ENCODE measurements at regions of chr13 and their contacts with region 1.

Region 1: DNA sequence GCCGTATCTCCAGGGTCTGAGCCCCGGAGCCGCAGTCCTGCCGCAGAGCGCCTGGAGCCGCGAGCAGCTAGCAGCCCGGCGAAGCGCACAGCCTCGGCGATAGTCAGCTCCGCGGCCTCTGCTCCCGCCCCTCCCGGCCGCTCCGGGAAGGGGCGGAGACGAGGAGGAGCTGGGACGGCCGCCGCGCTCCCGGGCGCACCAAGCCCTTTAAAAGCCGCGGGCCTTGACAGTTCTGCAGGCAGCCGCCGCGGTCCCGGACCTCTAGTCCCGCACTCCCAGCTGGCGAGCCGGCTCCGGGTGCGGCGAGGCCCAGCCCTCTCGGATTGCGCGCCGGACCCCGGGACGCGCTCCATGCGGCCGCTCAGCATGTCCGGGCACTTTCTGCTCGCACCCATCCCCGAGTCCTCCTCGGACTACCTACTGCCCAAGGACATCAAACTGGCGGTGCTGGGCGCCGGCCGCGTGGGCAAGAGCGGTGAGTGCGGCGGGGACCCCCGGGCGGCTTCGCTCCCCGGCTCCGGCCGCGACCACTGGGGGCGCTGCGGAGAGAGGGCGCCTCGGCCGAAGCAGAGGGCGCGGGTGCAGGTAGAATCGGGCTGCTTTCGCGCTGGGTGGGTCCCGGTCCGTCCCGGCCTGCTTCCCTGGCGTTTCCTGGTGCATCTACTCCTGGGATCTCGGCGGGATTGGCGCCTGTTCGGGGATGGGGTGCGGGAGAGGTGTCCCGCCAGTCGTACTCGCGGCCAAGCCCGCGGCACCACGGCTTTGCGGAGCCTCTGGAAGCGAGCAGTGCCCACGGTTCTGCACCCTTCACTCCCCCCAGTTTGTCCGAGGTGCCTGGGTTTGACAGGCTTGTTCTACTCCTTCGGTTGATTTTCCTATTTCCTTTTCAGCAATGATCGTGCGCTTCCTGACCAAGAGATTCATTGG is at the start of gene RASL11A:
- DNase-seq: peak; percentile 93 to 96
- ATAC-seq: peak; percentile 96
- H3K4me3 ChIP-seq: peak within 1 kb of the TSS; percentile 65 to 85
- H3K27ac ChIP-seq: peak within 1 kb of the TSS; percentile 50 to 87
- H3K4me1 ChIP-seq: no peaks in the 10 kb centered on the region
- H3K27me3 ChIP-seq: no peaks in the 10 kb centered on the region
- total RNA-seq, gene RASL11A: 40.5 to 58.2 TPM

Region 2: DNA sequence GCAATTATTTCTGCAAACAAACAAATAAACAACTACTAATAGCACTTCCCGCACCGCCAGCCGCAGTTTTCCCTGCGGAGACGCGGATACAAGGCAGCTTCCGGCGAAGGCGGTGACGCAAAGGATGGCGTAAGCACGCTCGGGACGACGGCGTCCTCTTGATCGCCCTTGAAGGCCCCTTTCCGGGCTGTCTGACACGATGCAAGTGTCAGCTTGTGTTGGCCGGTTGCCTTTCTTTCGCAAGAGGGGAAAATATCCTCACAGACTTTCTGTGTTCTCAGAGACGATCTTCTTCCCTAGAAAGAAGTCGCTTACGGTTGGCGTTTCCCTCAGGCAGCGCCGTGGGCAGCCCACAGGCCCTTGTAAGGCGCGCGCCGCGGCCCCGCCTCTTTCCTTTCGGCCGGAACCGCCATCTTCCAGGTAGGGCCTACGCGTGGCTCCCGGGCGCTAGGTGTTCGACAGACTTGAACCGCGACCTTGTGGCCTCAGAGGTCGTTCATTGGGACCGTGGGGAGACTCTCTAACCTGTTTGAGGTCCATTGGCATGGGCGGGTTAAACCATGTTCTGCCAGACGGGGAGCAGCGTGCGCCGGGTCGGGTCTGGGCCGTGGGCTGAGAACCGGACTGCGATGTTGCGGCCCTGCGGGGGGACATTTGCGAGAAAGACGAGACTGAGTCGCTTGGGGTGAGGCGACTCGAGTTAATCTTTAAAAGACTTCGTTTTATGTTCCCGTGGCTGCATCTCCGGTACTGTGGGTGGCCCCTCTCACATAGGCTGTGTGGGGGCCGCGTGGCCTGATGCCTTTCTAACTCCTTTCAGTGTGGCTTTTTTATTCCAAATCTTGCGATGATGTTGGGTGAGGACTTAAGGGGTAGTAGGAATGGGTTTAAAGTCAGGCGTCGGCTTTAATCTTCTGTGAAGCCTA is 19.4 kb before region 1 on chr13 and contains the start of gene RPL21:
- intact Hi-C with region 1: loop called in 1 of 2 experiments (anchors 2 kb)
- DNase-seq: peak; percentile 98
- ATAC-seq: peak; percentile 98
- H3K4me3 ChIP-seq: peak within 1 kb of the TSS; percentile 74 to 86
- H3K27ac ChIP-seq: peak within 1 kb of the TSS; percentile 35 to 74
- H3K4me1 ChIP-seq: peaks cover 2 to 6% of the 10 kb centered on the region in 2 donors
- H3K27me3 ChIP-seq: no peaks in the 10 kb centered on the region
- total RNA-seq, gene RPL21: 828 to 889 TPM

Region 3: DNA sequence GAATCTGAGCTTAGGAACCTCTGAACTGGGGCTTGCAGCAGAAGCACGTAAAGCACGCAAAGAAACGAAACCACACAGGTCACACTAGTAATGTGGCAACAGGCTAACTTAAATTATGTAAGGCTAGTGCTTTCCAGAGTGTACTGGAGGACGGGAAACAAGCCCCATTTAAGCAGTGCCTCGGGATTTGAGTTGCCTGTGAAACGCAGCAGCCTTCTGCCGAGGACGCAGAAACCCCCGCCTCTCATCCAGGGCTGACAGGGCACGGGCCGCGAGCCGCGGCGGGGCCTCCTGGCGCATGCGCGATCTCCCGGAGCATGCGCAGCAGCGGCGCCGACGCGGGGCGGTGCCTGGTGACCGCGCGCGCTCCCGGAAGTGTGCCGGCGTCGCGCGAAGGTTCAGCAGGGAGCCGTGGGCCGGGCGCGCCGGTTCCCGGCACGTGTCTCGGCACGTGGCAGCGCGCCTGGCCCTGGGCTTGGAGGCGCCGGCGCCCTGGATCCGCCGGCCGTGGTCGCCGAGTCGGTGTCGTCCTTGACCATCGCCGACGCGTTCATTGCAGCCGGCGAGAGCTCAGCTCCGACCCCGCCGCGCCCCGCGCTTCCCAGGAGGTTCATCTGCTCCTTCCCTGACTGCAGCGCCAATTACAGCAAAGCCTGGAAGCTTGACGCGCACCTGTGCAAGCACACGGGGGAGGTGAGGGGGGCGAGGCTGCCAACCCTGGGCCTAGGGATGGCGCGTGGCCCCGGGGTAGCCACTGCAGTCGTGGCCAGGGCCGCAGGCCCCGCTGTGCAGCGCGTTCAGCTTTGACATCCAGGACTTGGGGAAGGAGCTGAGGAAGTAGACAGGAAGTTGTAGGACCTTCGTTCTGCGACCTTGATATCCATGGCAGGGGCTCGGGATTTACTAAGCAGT is 153.6 kb after region 1 on chr13 and contains the start of gene GTF3A:
- intact Hi-C with region 1: loop called in 1 of 2 experiments (anchors 10 kb)
- DNase-seq: peak; percentile 87 to 93
- ATAC-seq: peak; percentile 97
- H3K4me3 ChIP-seq: peak within 1 kb of the TSS; percentile 71 to 87
- H3K27ac ChIP-seq: peak within 1 kb of the TSS in 1 of 2 donors; percentile 55
- H3K4me1 ChIP-seq: peaks cover 2 to 3% of the 10 kb centered on the region in 2 donors
- H3K27me3 ChIP-seq: no peaks in the 10 kb centered on the region
- total RNA-seq, gene GTF3A: 62.1 to 68.5 TPM

Measured in aorta (tissue), 5 donors.